ENCODE measurements at regions of chr7 and their contacts with region 1.

Region 1: GRCh38 chr7:151759591-151760042 is 117.3 kb downstream of the PRKAG2 start:
- DNase-seq: peak; percentile 65
- ATAC-seq: peak; percentile 45 to 59

Region 2: GRCh38 chr7:151570366-151570915 is 189.2 kb before region 1 on chr7:
- intact Hi-C with region 1: loop called in 1 of 2 experiments (anchors 10 kb)
- DNase-seq: no peak
- ATAC-seq: no peak

Measured in left cardiac atrium (tissue), 4 donors.